Gastrocnemius medialis (tissue), 4 donors: ENCODE measurements at regions of chr12 and their contacts with region 1.

Region 1: GRCh38 chr12:27024291-27024690 is 1.9 kb downstream of the MED21 start:
- DNase-seq: no peak
- ATAC-seq: no peak
- H3K4me3 ChIP-seq: no peak overlapping the region
- H3K27ac ChIP-seq: no peak overlapping the region
- H3K4me1 ChIP-seq: peaks cover 18 to 23% of the 10 kb centered on the region in 2 donors
- H3K27me3 ChIP-seq: no peaks in the 10 kb centered on the region
- CTCF ChIP-seq: no peak
- POLR2A ChIP-seq: no peak

Region 2: DNA sequence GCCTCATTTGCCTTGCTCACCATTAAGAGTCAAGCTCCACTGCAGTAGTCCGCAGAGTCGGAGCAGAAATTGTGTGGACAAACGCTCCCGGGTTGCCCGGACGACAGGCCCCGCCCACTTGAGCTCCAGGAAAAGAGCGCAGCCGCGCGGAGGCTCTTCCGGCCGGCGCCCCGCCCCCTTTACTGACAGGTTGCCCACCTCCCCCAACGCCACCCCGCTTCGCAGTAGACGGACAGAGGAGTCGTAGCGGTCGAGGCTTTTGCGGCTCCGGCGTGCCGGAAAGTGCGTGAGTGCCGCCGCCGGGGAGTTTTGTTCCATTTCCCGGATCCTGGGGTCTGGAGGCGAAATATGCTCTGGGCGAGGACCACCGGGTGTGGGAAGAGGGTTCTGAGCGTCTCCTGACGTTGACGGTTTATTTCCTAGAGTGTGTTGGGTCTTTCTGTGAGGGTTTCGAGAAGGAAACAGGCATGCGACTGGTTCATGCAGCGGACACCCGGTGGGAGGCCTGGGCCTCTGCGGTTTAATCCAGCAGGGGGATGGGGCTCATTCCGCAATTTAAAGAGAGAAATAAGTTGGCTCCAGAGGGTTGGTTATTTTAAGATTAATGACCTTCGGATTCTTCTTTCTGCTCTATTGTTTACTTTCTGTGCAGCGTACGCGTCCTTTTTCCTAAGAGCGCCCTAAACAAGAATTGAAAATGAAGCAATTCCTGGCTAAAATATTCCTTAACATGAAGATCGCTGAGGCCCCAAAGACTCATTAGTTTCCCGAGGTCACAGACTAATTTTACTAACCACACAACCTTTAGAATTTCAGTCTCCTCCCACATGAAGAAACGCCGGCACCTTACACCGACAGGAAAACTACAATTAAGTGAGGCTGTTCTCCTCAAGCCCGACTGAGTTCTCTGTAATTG is 1829.0 kb before region 1 on chr12 and contains the starts of genes DNAI7 and ETFRF1:
- in situ Hi-C with region 1: no loop called
- intact Hi-C with region 1: loop called (anchors 10 kb)
- DNase-seq: peak; percentile 93 to 95
- ATAC-seq: peak; percentile 96 to 97
- H3K4me3 ChIP-seq: peak within 1 kb of the TSS; percentile 74 to 97 (median 78)
- H3K27ac ChIP-seq: peak within 1 kb of the TSS; percentile 90 to 97 (median 92)
- H3K4me1 ChIP-seq: peaks cover 18 to 27% of the 10 kb centered on the region in 2 donors
- H3K27me3 ChIP-seq: no peaks in the 10 kb centered on the region
- CTCF ChIP-seq: no peak
- POLR2A ChIP-seq: peak; percentile 78 to 91
- total RNA-seq, gene DNAI7: not detected
- total RNA-seq, gene ETFRF1: 45.9 to 105 (median 74.6) TPM

Region 3: DNA sequence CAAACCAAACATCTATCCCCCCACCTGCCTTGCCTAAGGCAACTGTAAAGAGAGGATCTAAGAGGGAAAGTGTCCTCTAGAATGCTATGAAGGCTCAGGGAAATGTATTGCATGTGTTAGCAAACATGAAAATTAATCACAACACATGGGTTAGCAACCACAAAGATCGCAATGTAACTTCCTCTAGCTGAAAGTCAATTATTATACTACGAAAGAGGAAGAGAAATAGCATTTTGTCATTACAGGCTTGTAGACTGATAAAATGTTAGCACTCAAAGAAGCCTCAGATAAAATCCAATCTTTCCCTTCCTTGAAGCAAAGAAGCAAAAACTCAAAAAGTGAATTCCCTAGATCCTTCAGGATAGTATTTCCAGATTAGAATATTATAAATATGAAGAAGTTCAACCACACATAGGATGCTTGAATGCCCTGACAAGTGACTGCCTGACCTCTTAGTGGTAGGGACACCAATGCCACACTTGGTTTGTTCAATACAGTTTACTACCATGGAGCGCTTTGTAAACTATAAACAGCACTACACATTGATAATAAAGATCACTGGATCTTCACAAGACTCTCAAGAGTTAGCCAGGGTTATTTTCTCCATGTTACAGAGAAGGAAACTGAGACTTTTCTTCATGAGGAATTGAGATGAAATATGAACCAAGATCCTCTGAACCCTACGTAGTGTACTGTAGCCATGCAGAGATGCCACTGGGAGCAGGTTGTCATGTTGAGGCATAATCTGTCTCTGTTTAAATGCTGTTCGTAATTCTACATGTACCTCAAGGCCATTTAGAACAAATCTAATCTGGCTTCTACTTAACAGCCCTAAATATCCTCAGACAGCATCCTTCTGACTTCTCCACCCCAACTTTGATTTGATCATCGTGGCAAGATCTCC is 292.0 kb before region 1 on chr12:
- in situ Hi-C with region 1: no loop called
- intact Hi-C with region 1: no loop called
- DNase-seq: no peak
- ATAC-seq: no peak
- H3K4me3 ChIP-seq: no peak overlapping the region
- H3K27ac ChIP-seq: no peak overlapping the region
- H3K4me1 ChIP-seq: peaks cover 6 to 13% of the 10 kb centered on the region in 2 donors
- H3K27me3 ChIP-seq: no peaks in the 10 kb centered on the region
- CTCF ChIP-seq: no peak
- POLR2A ChIP-seq: no peak

Region 4: GRCh38 chr12:26937875-26938700 is 86.2 kb before region 1 on chr12 and contains the starts of genes FGFR1OP2 and INTS13:
- in situ Hi-C with region 1: loop called in 1 of 4 experiments (anchors 10 kb)
- intact Hi-C with region 1: no loop called
- DNase-seq: peak; percentile 98
- ATAC-seq: peak; percentile 94
- H3K4me3 ChIP-seq: peak within 1 kb of the TSS; percentile 68 to 99 (median 90)
- H3K27ac ChIP-seq: peak within 1 kb of the TSS; percentile 94 to 97 (median 96)
- H3K4me1 ChIP-seq: peaks cover 57 to 69% of the 10 kb centered on the region in 2 donors
- H3K27me3 ChIP-seq: no peaks in the 10 kb centered on the region
- CTCF ChIP-seq: no peak
- POLR2A ChIP-seq: peak; percentile 95 to 96
- total RNA-seq, gene FGFR1OP2: 43.8 to 56.4 (median 45.9) TPM
- total RNA-seq, gene INTS13: 21.3 to 39.9 (median 32.7) TPM

Region 5: DNA sequence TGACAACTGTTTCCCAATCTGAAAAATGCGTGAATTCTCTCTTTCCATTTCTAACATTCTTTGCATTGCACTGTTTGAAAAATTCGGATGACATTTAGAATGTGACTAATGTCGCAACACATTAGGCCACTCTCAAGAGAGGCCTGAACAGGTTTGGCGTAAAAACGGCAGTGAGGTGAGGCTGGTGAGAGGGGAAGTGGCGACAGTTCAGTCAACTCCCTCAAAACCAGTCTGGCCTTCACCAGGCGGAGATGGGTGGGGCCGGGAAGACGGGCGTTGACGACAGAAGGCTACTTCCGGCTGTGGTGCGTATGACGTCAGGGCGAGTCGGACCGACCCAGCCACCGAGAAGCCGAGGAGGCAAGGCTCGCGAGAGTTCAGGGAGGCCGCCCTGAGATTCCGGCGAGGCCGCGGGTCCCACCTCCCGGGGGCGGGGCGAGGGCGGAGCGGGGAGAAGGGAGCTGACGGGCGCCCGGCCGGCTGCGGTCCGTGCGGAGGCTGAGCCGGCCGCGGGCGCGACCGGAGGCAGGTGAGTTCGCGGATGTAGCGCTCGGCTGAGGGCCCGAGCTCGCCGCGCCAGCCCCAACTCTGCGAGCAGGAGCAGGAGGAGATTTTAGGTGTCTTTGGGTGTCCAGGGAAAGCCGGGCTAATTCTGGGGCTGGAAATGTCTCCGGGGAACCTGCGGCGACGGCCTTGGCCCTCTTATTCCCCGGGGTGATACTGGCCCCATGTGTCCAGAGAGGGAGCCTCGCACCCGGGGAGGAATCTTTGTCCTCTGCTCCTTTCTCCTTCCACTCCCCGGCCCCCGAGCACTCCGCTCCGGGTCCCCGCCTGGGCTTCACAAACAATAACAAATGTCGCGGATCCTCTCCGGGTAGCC is 219.8 kb after region 1 on chr12 and contains the start of gene STK38L:
- in situ Hi-C with region 1: no loop called
- intact Hi-C with region 1: loop called (anchors 5 kb)
- DNase-seq: peak; percentile 79 to 91
- ATAC-seq: peak; percentile 87 to 90
- H3K4me3 ChIP-seq: peak within 1 kb of the TSS; percentile 79 to 95 (median 82)
- H3K27ac ChIP-seq: peak within 1 kb of the TSS; percentile 77 to 86 (median 82)
- H3K4me1 ChIP-seq: peaks cover 16% of the 10 kb centered on the region in 2 donors
- H3K27me3 ChIP-seq: no peaks in the 10 kb centered on the region
- CTCF ChIP-seq: peak in 1 of 5 experiments; percentile 12
- POLR2A ChIP-seq: peak; percentile 82 to 88
- total RNA-seq, gene STK38L: 12.9 to 20.0 (median 13.5) TPM

Region 6: DNA sequence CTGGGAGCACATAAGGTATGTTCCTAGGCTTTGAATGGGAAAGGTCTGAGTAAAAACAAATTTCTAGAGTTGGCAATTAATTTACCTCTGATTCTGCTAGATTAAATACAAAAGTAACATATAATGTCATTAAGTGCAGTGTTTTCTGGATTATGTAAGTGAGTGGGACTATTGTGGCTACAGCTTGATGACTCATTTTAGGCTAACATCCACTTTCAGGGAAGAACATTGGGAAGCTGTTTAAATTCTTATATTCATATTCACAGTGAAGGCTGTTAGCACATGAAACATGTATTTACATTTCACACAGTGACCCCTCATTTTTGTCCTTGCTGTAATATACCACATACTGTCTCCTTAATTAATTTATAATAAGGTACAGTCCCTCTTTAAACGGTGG is 295.1 kb after region 1 on chr12:
- in situ Hi-C with region 1: loop called in 3 of 4 experiments (anchors 10 to 25 kb)
- intact Hi-C with region 1: no loop called
- DNase-seq: no peak
- ATAC-seq: no peak
- H3K4me3 ChIP-seq: no peak overlapping the region
- H3K27ac ChIP-seq: no peak overlapping the region
- H3K4me1 ChIP-seq: no peaks in the 10 kb centered on the region
- H3K27me3 ChIP-seq: no peaks in the 10 kb centered on the region
- CTCF ChIP-seq: no peak
- POLR2A ChIP-seq: no peak

Region 7: DNA sequence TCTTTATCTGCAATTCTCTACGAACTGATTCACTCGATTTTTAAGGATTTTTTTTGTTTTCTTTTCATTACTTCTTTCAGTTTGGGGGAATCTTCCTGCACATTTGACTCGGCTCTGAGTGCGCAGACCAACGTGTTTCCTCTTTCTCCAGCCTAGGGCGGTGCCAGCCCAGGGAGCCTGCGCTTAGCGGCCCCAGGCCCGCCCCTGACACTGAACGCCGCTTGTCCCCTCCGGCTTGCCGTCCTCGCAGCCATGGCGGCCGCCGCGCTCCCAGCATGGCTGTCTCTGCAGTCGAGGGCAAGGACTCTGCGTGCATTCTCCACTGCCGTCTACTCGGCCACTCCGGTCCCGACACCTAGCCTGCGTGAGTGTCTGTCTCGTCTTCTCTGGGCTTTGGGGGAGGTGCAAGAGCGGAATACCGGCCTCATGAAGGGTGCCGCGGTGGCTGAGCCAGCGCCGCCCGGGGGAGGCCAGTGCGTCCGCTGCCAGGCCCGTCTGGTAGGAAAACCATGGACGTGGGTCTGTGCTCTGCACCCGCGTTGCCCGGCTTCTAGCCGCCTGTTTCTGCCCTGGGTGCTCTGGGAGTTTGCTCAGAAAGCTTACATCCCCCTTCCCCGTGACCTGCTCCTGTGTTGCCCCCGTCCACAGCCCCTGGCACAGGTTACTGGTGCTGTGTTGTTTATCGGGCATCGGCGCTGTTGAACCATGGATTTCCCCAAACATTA is 686.5 kb after region 1 on chr12 and contains the start of gene MRPS35:
- in situ Hi-C with region 1: no loop called
- intact Hi-C with region 1: loop called (anchors 10 kb)
- DNase-seq: peak; percentile 85 to 87
- ATAC-seq: peak; percentile 95 to 96
- H3K4me3 ChIP-seq: peak within 1 kb of the TSS; percentile 82 to 98 (median 86)
- H3K27ac ChIP-seq: peak within 1 kb of the TSS; percentile 78 to 87 (median 85)
- H3K4me1 ChIP-seq: peaks cover 19 to 23% of the 10 kb centered on the region in 2 donors
- H3K27me3 ChIP-seq: no peaks in the 10 kb centered on the region
- CTCF ChIP-seq: no peak
- POLR2A ChIP-seq: peak; percentile 46 to 56
- total RNA-seq, gene MRPS35: 76.3 to 153 (median 98.2) TPM

Region 8: GRCh38 chr12:27999521-27999920 is 975.2 kb after region 1 on chr12:
- in situ Hi-C with region 1: no loop called
- intact Hi-C with region 1: no loop called
- DNase-seq: no peak
- ATAC-seq: no peak
- H3K4me3 ChIP-seq: no peak overlapping the region
- H3K27ac ChIP-seq: no peak overlapping the region
- H3K4me1 ChIP-seq: no peaks in the 10 kb centered on the region
- H3K27me3 ChIP-seq: no peaks in the 10 kb centered on the region
- CTCF ChIP-seq: no peak
- POLR2A ChIP-seq: no peak